ENCODE measurements at regions of chr20 and their contacts with region 1.

Region 1: GRCh38 chr20:34704177-34705007 is at the start of gene TP53INP2:
- DNase-seq: peak; percentile 96
- H3K4me3 Mint-ChIP-seq: peak within 1 kb of the TSS; percentile 88
- H3K27ac Mint-ChIP-seq: peak within 1 kb of the TSS; percentile 90
- H3K4me1 Mint-ChIP-seq: peaks cover 29% of the 10 kb centered on the region
- H3K27me3 Mint-ChIP-seq: peaks cover 16% of the 10 kb centered on the region
- total RNA-seq, gene TP53INP2: 2.3 and 2.7 TPM in 2 replicates

Region 2: GRCh38 chr20:34302723-34303528 is 401.5 kb before region 1 on chr20 and contains the start of gene AHCY:
- intact Hi-C with region 1: loop called (anchors 2 kb)
- DNase-seq: peak; percentile 98
- H3K4me3 Mint-ChIP-seq: peak within 1 kb of the TSS; percentile 91
- H3K27ac Mint-ChIP-seq: peak within 1 kb of the TSS; percentile 94
- H3K4me1 Mint-ChIP-seq: peaks cover 18% of the 10 kb centered on the region
- H3K27me3 Mint-ChIP-seq: peaks cover 2% of the 10 kb centered on the region
- total RNA-seq, gene AHCY: 153 and 154 TPM in 2 replicates

Region 3: GRCh38 chr20:34538671-34539123 is 165.7 kb before region 1 on chr20:
- intact Hi-C with region 1: loop called (anchors 1 kb)
- DNase-seq: peak; percentile 90
- H3K4me3 Mint-ChIP-seq: no peak overlapping the region
- H3K27ac Mint-ChIP-seq: no peak overlapping the region
- H3K4me1 Mint-ChIP-seq: peaks cover 14% of the 10 kb centered on the region
- H3K27me3 Mint-ChIP-seq: no peaks in the 10 kb centered on the region

Region 4: DNA sequence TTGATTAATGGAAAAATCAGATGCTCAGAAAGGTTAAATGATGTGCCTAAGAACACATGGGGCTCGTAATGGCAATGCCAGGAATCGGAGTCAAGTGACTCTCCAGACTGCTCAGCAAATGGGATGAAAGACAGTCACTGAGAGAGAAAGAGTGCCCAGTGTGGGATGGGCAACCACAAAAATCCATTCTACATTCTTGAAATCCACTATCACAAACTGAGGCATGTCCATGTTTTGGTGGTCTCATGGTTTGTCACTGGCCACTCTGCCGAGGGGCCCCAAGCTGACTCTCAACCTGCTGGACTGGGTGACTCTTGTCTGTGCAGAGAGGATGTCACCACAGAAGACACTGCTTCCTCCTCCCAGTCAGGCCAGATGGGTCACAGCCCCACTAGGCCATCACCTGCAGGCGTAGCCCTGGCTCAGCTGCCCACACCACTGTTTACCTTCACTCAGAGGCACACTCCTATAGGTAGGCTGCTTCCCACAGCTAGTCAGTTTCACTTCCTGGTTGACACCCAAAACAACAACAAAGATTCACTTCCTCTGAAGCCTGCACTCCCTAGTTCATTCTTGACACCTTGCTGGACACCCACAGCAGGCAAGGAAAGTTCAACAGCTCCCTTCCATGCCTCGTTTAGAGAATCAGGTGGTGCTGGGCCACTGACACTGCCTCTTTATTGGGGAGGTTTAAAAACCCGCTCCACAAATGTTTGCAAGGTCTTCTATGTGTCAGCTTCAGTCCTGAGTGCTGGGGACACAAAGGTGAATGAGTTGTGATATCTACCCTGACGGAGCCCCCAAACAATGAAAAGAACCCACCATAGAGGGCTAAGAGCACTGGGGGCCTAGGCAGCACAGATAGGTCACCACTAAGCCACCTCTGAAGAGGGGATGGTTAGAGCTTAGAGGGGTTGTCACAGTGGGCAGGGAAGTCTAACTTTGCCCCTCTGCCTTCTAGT is 124.1 kb before region 1 on chr20:
- intact Hi-C with region 1: loop called (anchors 5 kb)
- DNase-seq: peak; percentile 83
- H3K4me3 Mint-ChIP-seq: peak overlapping the region; percentile 42
- H3K27ac Mint-ChIP-seq: peak overlapping the region; percentile 89
- H3K4me1 Mint-ChIP-seq: peaks cover 35% of the 10 kb centered on the region
- H3K27me3 Mint-ChIP-seq: no peaks in the 10 kb centered on the region

Region 5: DNA sequence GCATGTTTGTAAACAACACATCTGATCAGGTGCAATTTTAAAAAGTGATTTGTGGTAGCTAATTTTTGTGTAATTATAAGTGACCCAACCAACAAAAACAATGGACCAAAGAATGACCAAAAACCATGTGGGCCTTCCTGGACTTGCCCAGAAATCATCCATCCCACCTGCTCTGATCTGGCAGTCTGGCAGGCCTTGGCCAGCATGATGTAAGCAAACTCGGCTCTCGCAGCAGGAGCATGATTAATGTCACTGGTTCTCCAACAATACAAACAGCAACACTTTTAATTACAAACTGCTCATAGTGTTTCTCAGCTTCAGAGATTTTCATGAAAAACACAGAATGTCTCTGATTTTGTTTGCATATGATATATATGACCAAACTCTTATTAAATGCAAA is 15.9 kb after region 1 on chr20:
- intact Hi-C with region 1: loop called (anchors 1 kb)
- DNase-seq: no peak
- H3K4me3 Mint-ChIP-seq: no peak overlapping the region
- H3K27ac Mint-ChIP-seq: no peak overlapping the region
- H3K4me1 Mint-ChIP-seq: peaks cover 19% of the 10 kb centered on the region
- H3K27me3 Mint-ChIP-seq: no peaks in the 10 kb centered on the region

Region 6: DNA sequence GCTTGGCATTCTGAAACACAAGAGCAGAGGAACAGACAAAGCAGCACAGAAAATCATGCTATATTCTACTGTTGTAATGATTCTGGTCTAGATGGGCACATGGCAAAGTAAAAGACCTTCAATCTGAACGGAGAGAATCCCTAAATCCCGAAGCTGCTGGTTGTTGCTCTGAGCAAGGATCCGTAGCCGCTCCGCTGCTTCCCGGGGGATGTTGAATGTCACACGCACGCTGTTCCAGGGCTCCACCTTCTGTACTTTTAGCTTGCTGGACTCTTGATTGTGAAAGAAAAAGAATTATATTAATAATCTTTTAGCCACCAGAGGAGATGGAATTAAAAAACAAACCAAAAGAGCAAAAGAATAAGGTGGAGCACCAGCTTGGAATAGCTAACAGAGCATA is 71.8 kb after region 1 on chr20:
- intact Hi-C with region 1: no loop called
- DNase-seq: peak; percentile 33
- H3K4me3 Mint-ChIP-seq: no peak overlapping the region
- H3K27ac Mint-ChIP-seq: no peak overlapping the region
- H3K4me1 Mint-ChIP-seq: peaks cover 2% of the 10 kb centered on the region
- H3K27me3 Mint-ChIP-seq: no peaks in the 10 kb centered on the region

Measured in activated CD4-positive, alpha-beta T cell treated with anti-CD3 and anti-CD28 coated beads, Interleukin-2, amount 10 ng/mL, durations not matched to agents 24 days and 14 days (primary cell).